IMR-90 (cell line): ENCODE measurements at regions of chr14 and their contacts with region 1.

Region 1: DNA sequence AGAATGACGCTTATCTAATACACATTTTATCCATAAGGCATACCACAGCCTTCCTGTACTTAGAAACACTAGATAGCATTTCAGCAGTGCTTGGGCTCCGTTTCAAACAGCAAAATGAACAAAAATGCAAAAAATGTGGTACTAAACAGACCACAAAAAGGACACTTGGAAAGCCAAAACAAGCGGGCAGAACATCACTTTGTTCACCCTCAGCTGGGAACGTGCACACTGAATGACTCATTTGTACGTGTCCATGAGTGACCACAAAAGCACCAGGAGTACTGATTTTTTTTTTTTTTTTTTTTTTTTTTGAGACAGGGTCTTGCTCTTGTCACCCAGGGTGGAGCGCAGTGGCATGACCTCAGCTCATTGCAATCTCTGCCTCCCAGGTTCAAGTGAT is 8.9 kb upstream of the FOXN3 start:
- DNase-seq: peak; percentile 99
- ATAC-seq: peak; percentile 76
- H3K4me3 ChIP-seq: no peak overlapping the region
- H3K27ac ChIP-seq: peak overlapping the region; percentile 16; the same call in 1 of the 2 replicates
- H3K4me1 ChIP-seq: peaks cover 23% of the 10 kb centered on the region
- H3K27me3 ChIP-seq: no peaks in the 10 kb centered on the region
- CTCF ChIP-seq: no peak
- POLR2A ChIP-seq: no peak
- RAD21 ChIP-seq: no peak; the same call in 1 of the 2 replicates

Region 2: DNA sequence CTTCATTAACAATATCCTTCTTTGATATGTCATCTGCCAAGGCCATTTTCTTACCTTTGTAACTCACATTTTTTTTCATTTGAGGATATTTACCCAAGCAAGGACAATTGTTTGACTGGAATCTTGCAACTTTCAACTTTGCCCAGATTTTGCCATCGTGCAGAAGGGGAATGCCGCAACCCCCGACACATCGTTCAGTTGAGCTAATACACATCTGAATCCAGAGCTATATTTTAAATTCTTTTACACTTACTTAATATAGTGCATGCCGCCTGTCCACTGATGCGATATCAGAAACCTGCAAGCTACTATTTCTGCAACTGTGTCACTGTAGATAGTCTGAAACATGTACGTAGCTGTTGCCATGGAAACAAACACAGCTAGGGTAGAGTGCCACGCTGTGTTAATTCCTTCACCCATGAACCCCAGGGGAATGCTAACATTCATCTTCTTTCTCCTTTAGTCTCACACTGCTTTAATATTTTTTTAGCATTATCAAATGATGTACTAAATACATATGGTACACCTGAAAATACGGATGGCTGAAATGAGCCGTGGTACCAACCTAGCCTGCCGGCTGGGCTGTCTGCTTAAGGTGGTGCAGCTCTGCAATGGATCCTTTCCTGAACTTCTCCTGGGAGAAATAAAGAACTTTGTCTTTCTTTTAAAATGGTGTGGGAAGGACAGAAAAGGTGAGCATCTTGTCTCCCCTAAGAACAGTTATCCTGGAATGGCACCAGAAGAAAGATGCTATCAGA is 68.1 kb after region 1 on chr14:
- CTCF ChIA-PET with region 1: no interaction called
- POLR2A ChIA-PET with region 1: no interaction called
- dilution Hi-C with region 1: no loop called
- in situ Hi-C with region 1: no loop called
- intact Hi-C with region 1: loop called (anchors 5 kb)
- DNase-seq: no peak
- ATAC-seq: no peak
- H3K4me3 ChIP-seq: no peak overlapping the region
- H3K27ac ChIP-seq: no peak overlapping the region
- H3K4me1 ChIP-seq: peaks cover 13% of the 10 kb centered on the region
- H3K27me3 ChIP-seq: no peaks in the 10 kb centered on the region
- CTCF ChIP-seq: no peak
- POLR2A ChIP-seq: no peak
- RAD21 ChIP-seq: no peak

Region 3: GRCh38 chr14:90049390-90049789 is 623.5 kb after region 1 on chr14:
- CTCF ChIA-PET with region 1: no interaction called
- POLR2A ChIA-PET with region 1: no interaction called
- dilution Hi-C with region 1: no loop called
- in situ Hi-C with region 1: no loop called
- intact Hi-C with region 1: no loop called
- DNase-seq: no peak
- ATAC-seq: no peak
- H3K4me3 ChIP-seq: no peak overlapping the region
- H3K27ac ChIP-seq: no peak overlapping the region
- H3K4me1 ChIP-seq: 0 out of 2 replicates have a peak, but pooled peaks cover 2% of the 10 kb centered on the region
- H3K27me3 ChIP-seq: no peaks in the 10 kb centered on the region
- CTCF ChIP-seq: no peak
- POLR2A ChIP-seq: no peak
- RAD21 ChIP-seq: no peak